Activated CD4-positive, alpha-beta memory T cell treated with anti-CD3 and anti-CD28 coated beads, Interleukin-2, amount 10 ng/mL, durations not matched to agents 7 days and 5 days (primary cell): ENCODE measurements at regions of chr5 and their contacts with region 1.

Region 1: DNA sequence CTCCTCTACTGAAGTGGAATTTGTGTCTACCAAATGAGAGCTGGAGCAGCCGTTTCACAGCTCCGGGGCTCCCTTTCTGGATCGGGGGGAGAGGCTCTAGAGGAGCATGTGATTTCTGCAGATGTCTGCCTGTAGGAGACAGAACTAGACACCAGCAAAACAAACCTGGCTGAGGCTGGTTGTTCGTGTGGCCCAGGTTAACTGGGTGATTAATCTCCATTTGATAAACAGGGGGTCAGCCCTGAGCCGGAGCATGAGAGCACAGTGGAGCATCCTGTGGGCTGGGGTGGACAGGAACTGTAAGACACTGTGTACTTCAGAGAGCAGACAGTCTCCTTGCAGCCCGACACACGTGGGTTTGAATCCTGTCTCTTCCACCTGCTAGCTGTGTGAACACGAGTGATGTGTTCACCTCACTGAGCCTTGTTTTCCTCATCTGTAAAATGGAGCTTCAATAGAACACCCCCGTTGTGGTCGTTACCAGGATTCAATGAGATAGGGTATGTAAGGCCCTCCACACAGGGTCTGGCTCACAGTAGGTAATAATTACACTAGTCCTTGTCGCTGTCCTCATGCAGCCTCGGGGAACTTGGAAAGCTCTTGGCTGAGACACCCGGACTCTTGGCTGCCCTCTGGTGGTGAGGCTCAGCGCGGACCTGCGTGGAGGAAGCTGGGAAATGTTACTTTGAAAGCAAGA is 12.9 kb downstream of the CXCL14 start:
- DNase-seq: peak; percentile 70
- H3K4me3 Mint-ChIP-seq: no peak overlapping the region
- H3K27ac Mint-ChIP-seq: no peak overlapping the region
- H3K4me1 Mint-ChIP-seq: no peaks in the 10 kb centered on the region
- H3K27me3 Mint-ChIP-seq: peaks cover 8% of the 10 kb centered on the region

Region 2: DNA sequence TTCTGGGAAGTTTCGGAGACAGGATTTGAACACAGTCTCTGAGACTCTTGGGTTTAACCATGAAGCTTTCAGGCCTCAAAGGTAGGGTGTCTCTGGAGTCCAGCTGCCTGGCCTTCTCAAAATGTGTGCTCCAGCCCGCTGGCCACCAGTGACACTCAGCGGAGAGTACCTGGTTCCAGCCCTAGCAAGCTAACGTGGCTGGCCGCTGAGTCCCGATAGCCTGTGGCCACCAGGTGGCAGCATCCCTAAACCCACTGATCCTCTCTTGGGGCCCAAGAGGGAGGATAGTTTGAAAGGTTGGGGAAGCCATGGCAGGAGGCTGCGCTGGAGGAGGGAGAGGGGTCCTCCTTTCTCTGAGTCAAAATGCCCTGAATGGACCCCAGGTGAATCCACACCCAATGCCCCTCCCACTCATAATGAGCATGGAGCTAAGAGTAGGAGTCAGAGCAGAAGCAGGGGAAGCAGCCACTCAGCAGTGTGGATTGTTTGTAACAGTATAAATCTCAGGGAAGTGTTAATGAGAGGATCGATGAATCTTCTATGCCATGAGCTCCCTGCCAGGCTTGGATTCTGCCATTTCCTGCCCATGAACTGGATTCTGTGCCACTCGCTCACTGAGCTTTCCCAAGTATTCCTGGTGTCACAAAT is 108.3 kb before region 1 on chr5:
- CTCF ChIA-PET with region 1: interaction called, 149 read pairs
- POLR2A ChIA-PET with region 1: no interaction called
- DNase-seq: peak; percentile 68
- H3K4me3 Mint-ChIP-seq: no peak overlapping the region
- H3K27ac Mint-ChIP-seq: no peak overlapping the region
- H3K4me1 Mint-ChIP-seq: peaks cover 3% of the 10 kb centered on the region
- H3K27me3 Mint-ChIP-seq: peaks cover 36% of the 10 kb centered on the region

Region 3: GRCh38 chr5:135466178-135467050 is 99.5 kb before region 1 on chr5:
- CTCF ChIA-PET with region 1: interaction called, 149 read pairs
- POLR2A ChIA-PET with region 1: no interaction called
- DNase-seq: peak; percentile 70
- H3K4me3 Mint-ChIP-seq: peak overlapping the region; percentile 16
- H3K27ac Mint-ChIP-seq: no peak overlapping the region
- H3K4me1 Mint-ChIP-seq: peaks cover 7% of the 10 kb centered on the region
- H3K27me3 Mint-ChIP-seq: peaks cover 49% of the 10 kb centered on the region

Region 4: GRCh38 chr5:135543485-135544304 is 22.2 kb before region 1 on chr5:
- CTCF ChIA-PET with region 1: interaction called, 86 read pairs
- POLR2A ChIA-PET with region 1: no interaction called
- DNase-seq: no peak
- H3K4me3 Mint-ChIP-seq: peak overlapping the region; percentile 90
- H3K27ac Mint-ChIP-seq: no peak overlapping the region
- H3K4me1 Mint-ChIP-seq: peaks cover 13% of the 10 kb centered on the region
- H3K27me3 Mint-ChIP-seq: peaks cover 90% of the 10 kb centered on the region

Region 5: GRCh38 chr5:135551593-135552447 is 14.1 kb before region 1 on chr5:
- CTCF ChIA-PET with region 1: interaction called, 86 read pairs
- POLR2A ChIA-PET with region 1: interaction called, 4 read pairs
- DNase-seq: peak; percentile 68
- H3K4me3 Mint-ChIP-seq: no peak overlapping the region
- H3K27ac Mint-ChIP-seq: no peak overlapping the region
- H3K4me1 Mint-ChIP-seq: no peaks in the 10 kb centered on the region
- H3K27me3 Mint-ChIP-seq: peaks cover 54% of the 10 kb centered on the region

Region 6: DNA sequence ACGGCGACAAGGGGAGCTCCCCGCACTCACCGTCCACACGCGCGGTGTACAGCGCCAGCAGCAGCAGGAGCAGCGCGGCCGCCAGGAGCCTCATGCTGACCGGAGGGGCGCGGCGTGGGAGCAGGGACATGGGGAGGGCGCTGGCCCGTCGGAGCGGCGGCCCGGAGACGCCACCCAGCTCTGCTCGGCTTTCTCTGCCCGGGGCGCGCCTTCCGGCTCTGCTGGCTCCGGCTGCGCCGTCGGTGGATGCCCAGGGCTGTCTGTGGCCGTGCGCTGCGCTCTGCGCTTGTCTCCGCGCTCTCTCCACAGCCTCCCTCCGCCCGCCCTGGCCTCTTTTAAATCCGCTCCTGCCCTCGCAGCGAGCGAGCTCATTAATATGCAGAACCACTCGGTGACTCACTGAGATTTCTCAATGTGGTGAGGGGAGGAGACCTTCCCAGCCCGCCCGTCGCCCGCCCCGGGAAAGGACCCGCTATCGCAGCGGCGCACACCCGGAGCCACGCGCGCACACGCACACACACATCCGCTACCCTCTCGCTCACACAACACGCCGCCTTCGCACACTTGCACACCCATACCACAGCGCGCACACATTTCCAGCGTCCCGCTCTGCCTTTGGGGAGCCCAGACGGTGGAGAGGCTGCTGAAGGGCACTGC is 12.9 kb after region 1 on chr5 and contains the start of gene CXCL14:
- CTCF ChIA-PET with region 1: interaction called, 28 read pairs
- POLR2A ChIA-PET with region 1: no interaction called
- DNase-seq: no peak
- H3K4me3 Mint-ChIP-seq: no peak within 1 kb of the TSS
- H3K27ac Mint-ChIP-seq: no peak within 1 kb of the TSS
- H3K4me1 Mint-ChIP-seq: peaks cover 2% of the 10 kb centered on the region
- H3K27me3 Mint-ChIP-seq: peaks cover 42% of the 10 kb centered on the region
- total RNA-seq, gene CXCL14: not detected